Right lobe of liver (tissue), 6 donors: ENCODE measurements at regions of chr19 and their contacts with region 1.

Region 1: GRCh38 chr19:17069218-17069617 is 6.0 kb downstream of the HAUS8 start:
- DNase-seq: no peak
- ATAC-seq: no peak
- H3K4me3 ChIP-seq: no peak overlapping the region
- H3K27ac ChIP-seq: no peak overlapping the region
- H3K4me1 ChIP-seq: peaks cover 0 to 21% (median 9%) of the 10 kb centered on the region in 4 donors
- H3K27me3 ChIP-seq: no peaks in the 10 kb centered on the region
- CTCF ChIP-seq: no peak
- POLR2A ChIP-seq: no peak

Region 2: DNA sequence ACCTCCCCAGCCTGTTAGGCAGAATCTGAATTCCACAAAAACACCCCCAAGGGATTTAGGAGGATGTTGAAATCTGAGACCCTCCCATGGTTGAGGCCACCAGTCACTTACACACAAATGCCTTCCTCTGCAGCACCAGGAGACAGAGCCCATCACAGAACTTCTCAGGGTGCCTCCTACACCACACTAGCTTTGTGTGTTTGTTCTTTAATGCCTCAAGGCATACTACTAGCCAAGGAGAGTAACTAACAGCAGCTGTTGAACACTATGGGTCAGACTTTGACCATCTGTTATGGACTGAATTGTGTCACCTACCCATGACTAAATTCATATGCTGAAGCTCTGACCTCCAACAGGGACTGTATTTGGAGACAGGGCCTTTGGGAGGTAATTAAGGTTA is 431.7 kb before region 1 on chr19:
- intact Hi-C with region 1: no loop called
- DNase-seq: no peak
- ATAC-seq: peak in 1 of 4 donors; percentile 81
- H3K4me3 ChIP-seq: no peak overlapping the region
- H3K27ac ChIP-seq: no peak overlapping the region
- H3K4me1 ChIP-seq: peaks cover 0 to 3% (median 0%) of the 10 kb centered on the region in 4 donors
- H3K27me3 ChIP-seq: no peaks in the 10 kb centered on the region
- CTCF ChIP-seq: no peak
- POLR2A ChIP-seq: no peak

Region 3: DNA sequence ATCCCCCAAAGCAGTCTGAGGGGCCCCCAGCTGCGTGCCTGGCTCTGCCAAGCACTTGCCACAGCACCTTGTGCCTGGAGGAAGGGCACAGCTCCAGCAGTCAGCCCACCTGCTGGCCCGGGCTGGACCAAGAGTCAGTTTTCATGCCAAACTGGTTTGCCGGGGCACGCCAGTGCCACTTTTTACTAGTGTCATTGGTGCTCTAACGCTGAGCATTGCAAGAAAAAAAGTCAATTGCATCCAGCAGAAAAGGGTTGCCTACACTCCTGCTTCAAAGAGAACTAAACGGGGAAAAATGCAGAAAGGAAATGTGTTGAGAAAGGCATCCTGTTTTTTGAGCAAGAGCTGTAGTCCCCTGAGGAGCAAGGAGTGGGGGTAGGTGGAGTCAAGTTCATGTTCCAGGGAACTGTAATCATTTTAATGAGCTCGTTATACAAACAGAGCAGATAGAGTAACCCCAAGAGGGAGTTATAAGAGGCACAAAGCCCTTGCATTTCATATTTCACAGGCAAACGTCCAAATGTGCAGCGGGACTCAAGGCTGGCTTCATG is 112.0 kb before region 1 on chr19:
- intact Hi-C with region 1: no loop called
- DNase-seq: no peak
- ATAC-seq: no peak
- H3K4me3 ChIP-seq: no peak overlapping the region
- H3K27ac ChIP-seq: no peak overlapping the region
- H3K4me1 ChIP-seq: no peaks in the 10 kb centered on the region
- H3K27me3 ChIP-seq: no peaks in the 10 kb centered on the region
- CTCF ChIP-seq: no peak
- POLR2A ChIP-seq: no peak

Region 4: DNA sequence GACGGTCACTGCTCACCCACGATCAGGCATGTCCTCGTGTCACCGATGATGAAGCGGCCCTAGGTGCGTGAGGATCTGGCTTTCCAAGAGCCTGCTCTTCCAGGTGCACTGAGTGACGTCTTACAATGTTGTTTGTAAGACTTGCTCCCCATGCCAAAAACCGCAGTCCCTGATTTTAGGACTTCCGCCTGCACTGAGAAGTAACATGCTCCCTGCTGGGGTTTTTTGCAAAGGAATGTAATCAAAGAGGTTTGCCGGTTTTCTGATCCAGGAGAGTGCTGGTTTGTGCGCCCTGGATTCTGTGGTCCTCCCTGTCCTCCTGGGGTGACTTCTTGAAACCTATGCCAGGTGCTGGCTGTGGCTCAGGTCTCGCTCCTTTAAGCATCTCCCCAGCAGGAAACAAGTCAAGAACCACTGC is 45.2 kb after region 1 on chr19:
- intact Hi-C with region 1: no loop called
- DNase-seq: no peak
- ATAC-seq: no peak
- H3K4me3 ChIP-seq: no peak overlapping the region
- H3K27ac ChIP-seq: peak overlapping the region in 1 of 3 donors; percentile 75
- H3K4me1 ChIP-seq: peaks cover 0 to 34% (median 15%) of the 10 kb centered on the region in 4 donors
- H3K27me3 ChIP-seq: no peaks in the 10 kb centered on the region
- CTCF ChIP-seq: no peak
- POLR2A ChIP-seq: no peak

Region 5: DNA sequence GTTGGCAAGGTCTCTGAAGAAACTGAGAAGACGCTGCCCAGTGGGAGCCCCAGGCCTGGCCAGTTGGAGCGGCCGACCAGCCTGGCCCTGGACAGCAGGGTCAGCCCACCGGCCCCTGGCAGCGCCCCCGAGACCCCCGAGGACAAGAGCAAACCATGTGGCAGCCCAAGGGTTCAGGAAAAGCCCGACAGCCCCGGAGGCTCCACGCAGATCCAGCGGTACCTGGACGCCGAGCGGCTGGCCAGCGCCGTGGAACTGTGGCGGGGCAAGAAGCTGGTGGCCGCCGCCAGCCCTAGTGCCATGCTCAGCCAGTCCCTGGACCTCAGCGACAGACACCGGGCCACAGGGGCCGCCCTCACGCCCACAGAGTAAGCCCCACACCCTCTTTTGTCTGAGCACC is 125.9 kb after region 1 on chr19:
- intact Hi-C with region 1: loop called in 1 of 2 experiments (anchors 10 kb)
- DNase-seq: no peak
- ATAC-seq: peak in 1 of 4 donors; percentile 16
- H3K4me3 ChIP-seq: no peak overlapping the region
- H3K27ac ChIP-seq: no peak overlapping the region
- H3K4me1 ChIP-seq: peaks cover 0 to 3% (median 1%) of the 10 kb centered on the region in 4 donors
- H3K27me3 ChIP-seq: no peaks in the 10 kb centered on the region
- CTCF ChIP-seq: no peak
- POLR2A ChIP-seq: no peak

Region 6: GRCh38 chr19:17282488-17283255 is 213.5 kb after region 1 on chr19:
- intact Hi-C with region 1: loop called (anchors 5 to 10 kb)
- DNase-seq: peak; percentile 86 to 89 (median 86)
- ATAC-seq: peak; percentile 97 to 100 (median 98)
- H3K4me3 ChIP-seq: peak overlapping the region in 2 of 3 donors; percentile 25 to 38
- H3K27ac ChIP-seq: no peak overlapping the region
- H3K4me1 ChIP-seq: peaks cover 0 to 14% (median 6%) of the 10 kb centered on the region in 4 donors
- H3K27me3 ChIP-seq: no peaks in the 10 kb centered on the region
- CTCF ChIP-seq: peak; percentile 93 to 99 (median 94)
- POLR2A ChIP-seq: no peak